AG04450 (cell line): ENCODE measurements at regions of chr11 and their contacts with region 1.

Region 1: GRCh38 chr11:10933455-10934292 is 75.8 kb upstream of the ZBED5 start:
- DNase-seq: peak; percentile 81
- H3K4me3 ChIP-seq: peak overlapping the region; percentile 62
- H3K27ac ChIP-seq: no peak overlapping the region
- H3K27me3 ChIP-seq: no peaks in the 10 kb centered on the region
- CTCF ChIP-seq: peak; percentile 96

Region 2: DNA sequence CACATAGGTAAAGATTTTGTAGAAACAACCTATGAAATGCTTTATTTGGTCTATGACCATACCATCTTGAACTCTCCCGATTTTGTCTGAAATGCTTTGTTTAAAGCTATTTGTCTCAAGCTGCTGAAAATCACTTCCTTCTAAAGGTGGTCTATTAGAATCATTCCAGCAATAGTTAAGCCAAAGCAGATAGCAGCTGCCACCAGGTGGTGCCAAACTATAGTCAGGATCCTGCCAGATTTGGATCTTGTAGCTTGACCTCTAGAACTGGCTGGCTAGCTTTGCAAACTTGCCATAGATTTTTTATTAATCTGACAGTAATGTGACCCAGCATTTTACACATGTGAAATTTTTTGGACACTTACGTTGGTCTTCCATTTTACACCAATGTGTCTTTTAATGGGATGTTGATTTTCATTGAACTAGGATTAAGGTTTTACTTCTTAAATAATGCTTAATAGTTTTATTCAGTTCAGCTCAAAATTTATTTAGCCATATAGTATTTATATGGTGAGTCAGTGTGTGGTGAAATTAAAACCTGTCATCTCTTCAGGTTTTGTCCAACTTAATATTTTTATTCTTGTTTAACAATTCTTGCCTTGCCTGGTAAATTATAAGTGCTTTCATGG is 162.9 kb before region 1 on chr11:
- CTCF ChIA-PET with region 1: interaction called, 11 read pairs
- POLR2A ChIA-PET with region 1: no interaction called
- DNase-seq: no peak
- H3K4me3 ChIP-seq: no peak overlapping the region
- H3K27ac ChIP-seq: no peak overlapping the region
- H3K27me3 ChIP-seq: no peaks in the 10 kb centered on the region
- CTCF ChIP-seq: peak; percentile 87

Region 3: DNA sequence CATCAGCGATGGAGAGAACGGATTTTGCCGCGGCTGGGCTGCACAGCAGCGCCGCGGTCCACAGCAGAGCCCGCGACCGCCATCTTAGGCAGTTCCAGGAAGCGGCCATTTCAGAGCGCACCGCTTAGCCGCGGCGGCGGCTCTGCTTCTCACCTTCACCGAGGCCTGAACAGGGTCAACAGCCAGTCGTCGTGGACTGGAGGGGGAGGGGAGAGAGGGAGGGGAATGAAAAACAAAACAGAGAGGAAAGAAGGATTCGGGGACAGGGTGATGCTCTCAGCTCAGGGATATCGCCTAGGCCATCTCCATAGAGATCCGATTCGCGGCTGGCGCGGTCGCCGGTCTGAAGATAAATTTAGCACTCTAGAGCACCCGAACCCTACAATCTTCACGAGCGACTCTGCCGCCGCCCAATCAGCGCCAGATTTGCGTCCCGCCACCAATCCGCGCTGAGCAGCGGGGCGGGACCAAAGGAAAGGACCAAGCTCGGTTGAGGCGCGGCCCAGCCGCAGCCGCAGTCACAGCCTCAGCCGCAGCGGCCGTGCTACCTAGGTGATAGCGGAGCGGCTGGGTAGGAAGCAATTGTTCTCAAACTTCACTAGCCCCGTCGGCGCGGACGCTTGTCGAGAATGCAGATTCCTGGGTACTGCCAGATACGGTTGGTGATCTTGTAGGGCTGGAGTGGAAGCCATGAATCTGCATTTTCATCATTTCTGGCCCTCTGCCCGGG is 75.8 kb before region 1 on chr11 and contains the start of gene ZBED5:
- CTCF ChIA-PET with region 1: interaction called, 7 read pairs
- POLR2A ChIA-PET with region 1: interaction called, 18 read pairs
- DNase-seq: peak; percentile 91
- H3K4me3 ChIP-seq: peak within 1 kb of the TSS; percentile 92
- H3K27ac ChIP-seq: peak within 1 kb of the TSS; percentile 97
- H3K27me3 ChIP-seq: no peaks in the 10 kb centered on the region
- CTCF ChIP-seq: peak; percentile 25; the same call in 1 of the 2 replicates
- polyA plus RNA-seq, gene ZBED5: 77.5 and 87.7 TPM in 2 replicates

Region 4: GRCh38 chr11:10885703-10886363 is 47.8 kb before region 1 on chr11:
- CTCF ChIA-PET with region 1: no interaction called
- POLR2A ChIA-PET with region 1: no interaction called
- DNase-seq: no peak
- H3K4me3 ChIP-seq: no peak overlapping the region
- H3K27ac ChIP-seq: no peak overlapping the region
- H3K27me3 ChIP-seq: no peaks in the 10 kb centered on the region
- CTCF ChIP-seq: no peak

Region 5: GRCh38 chr11:10943968-10944367 is 10.3 kb after region 1 on chr11:
- CTCF ChIA-PET with region 1: interaction called, 40 read pairs
- POLR2A ChIA-PET with region 1: interaction called, 5 read pairs
- DNase-seq: peak; percentile 34
- H3K4me3 ChIP-seq: no peak overlapping the region
- H3K27ac ChIP-seq: peak overlapping the region; percentile 25
- H3K27me3 ChIP-seq: peaks cover 12% of the 10 kb centered on the region
- CTCF ChIP-seq: no peak

Region 6: GRCh38 chr11:11022125-11022730 is 88.6 kb after region 1 on chr11:
- CTCF ChIA-PET with region 1: interaction called, 58 read pairs
- POLR2A ChIA-PET with region 1: no interaction called
- DNase-seq: no peak
- H3K4me3 ChIP-seq: no peak overlapping the region
- H3K27ac ChIP-seq: no peak overlapping the region
- H3K27me3 ChIP-seq: peaks cover 12% of the 10 kb centered on the region
- CTCF ChIP-seq: peak; percentile 52

Region 7: GRCh38 chr11:11078344-11079086 is 144.8 kb after region 1 on chr11:
- CTCF ChIA-PET with region 1: interaction called, 17 read pairs
- POLR2A ChIA-PET with region 1: no interaction called
- DNase-seq: no peak
- H3K4me3 ChIP-seq: no peak overlapping the region
- H3K27ac ChIP-seq: no peak overlapping the region
- H3K27me3 ChIP-seq: peaks cover 42% of the 10 kb centered on the region
- CTCF ChIP-seq: peak; percentile 31